HEK293 (cell line): ENCODE measurements at regions of chr3 and their contacts with region 1.

Region 1: DNA sequence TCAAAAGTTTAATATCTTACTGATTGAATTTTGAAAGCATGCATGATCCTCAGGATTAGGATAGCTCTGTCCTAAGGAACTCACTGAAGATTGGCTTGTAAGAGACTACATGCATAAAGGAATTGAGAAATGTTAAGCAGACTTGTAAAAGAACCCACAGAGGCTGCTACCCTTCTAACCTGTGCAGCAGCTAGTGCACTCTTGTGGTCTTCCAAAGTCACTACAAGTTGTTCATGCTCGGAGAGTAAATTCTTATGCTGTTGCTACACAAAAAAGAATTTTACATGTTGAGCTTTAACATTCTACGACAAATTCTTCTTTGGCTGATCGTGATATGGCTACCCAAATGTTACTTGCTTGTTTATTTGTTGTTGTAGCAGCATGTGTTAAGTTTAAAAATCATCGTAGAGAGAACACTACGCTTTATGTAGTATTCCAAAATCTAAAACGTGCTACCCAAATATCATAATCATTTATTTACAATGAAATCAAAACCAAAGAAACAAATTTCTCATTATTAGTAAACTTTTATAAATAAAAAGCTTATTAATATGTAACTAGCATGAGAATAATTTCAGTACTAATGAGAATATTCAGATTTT is 55.0 kb downstream of the GOLIM4 start:
- H3K4me3 ChIP-seq: no peak overlapping the region
- H3K27ac ChIP-seq: no peak overlapping the region
- H3K4me1 ChIP-seq: 0 out of 2 replicates have a peak, but pooled peaks cover 2% of the 10 kb centered on the region
- CTCF ChIP-seq: no peak

Region 2: DNA sequence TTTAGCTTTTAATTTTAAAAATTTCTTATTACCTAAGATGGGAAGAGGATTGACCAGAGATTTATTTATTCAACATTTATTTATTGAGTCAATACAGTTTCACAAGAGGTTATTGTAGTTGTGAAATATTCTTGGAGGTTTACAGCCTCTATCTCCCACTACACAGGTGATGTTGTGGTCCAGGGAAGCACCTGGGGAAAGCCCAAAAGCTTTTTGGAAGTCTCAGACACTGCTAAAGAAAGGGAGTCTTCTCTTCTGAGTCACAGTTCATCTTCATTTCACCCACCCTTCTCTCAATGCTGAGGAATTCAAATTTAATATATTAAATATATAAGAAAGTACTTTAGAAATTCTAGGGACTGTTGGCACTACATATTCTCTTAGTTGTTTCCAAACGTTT is 263.4 kb before region 1 on chr3:
- CTCF ChIA-PET with region 1: no interaction called
- POLR2A ChIA-PET with region 1: no interaction called
- H3K4me3 ChIP-seq: no peak overlapping the region
- H3K27ac ChIP-seq: no peak overlapping the region
- H3K4me1 ChIP-seq: no peaks in the 10 kb centered on the region
- CTCF ChIP-seq: no peak

Region 3: GRCh38 chr3:167918686-167919085 is 122.0 kb before region 1 on chr3:
- CTCF ChIA-PET with region 1: interaction called, 10 read pairs
- POLR2A ChIA-PET with region 1: no interaction called
- H3K4me3 ChIP-seq: no peak overlapping the region
- H3K27ac ChIP-seq: peak overlapping the region; percentile 43; the same call in 1 of the 2 replicates
- H3K4me1 ChIP-seq: peaks cover 5% of the 10 kb centered on the region
- CTCF ChIP-seq: no peak

Region 4: GRCh38 chr3:167929968-167930367 is 110.7 kb before region 1 on chr3:
- CTCF ChIA-PET with region 1: interaction called, 25 read pairs
- POLR2A ChIA-PET with region 1: no interaction called
- H3K4me3 ChIP-seq: no peak overlapping the region
- H3K27ac ChIP-seq: no peak overlapping the region
- H3K4me1 ChIP-seq: no peaks in the 10 kb centered on the region
- CTCF ChIP-seq: no peak

Region 5: DNA sequence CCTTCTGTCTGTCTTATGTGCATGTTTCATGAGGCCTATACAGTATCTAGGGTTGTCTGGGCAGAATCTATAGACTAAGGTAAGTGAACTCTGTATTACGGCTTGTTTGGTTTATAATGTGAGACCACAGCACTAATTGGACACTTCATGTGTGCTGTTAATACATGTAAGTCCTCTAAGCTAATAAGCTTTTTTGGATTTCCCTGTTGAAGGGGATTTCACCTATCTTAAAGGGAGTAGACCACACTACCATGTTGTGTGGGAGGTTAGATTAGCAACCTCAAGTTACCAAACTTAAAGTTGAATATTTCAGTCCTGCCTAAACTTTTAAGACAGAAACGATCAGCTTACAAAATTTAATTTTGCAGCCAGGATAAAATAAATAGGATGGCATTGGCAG is 244.8 kb after region 1 on chr3:
- CTCF ChIA-PET with region 1: no interaction called
- POLR2A ChIA-PET with region 1: no interaction called
- H3K4me3 ChIP-seq: no peak overlapping the region
- H3K27ac ChIP-seq: no peak overlapping the region
- H3K4me1 ChIP-seq: no peaks in the 10 kb centered on the region
- CTCF ChIP-seq: no peak